PC-9 (cell line): ENCODE measurements at regions of chr1 and their contacts with region 1.

Region 1: DNA sequence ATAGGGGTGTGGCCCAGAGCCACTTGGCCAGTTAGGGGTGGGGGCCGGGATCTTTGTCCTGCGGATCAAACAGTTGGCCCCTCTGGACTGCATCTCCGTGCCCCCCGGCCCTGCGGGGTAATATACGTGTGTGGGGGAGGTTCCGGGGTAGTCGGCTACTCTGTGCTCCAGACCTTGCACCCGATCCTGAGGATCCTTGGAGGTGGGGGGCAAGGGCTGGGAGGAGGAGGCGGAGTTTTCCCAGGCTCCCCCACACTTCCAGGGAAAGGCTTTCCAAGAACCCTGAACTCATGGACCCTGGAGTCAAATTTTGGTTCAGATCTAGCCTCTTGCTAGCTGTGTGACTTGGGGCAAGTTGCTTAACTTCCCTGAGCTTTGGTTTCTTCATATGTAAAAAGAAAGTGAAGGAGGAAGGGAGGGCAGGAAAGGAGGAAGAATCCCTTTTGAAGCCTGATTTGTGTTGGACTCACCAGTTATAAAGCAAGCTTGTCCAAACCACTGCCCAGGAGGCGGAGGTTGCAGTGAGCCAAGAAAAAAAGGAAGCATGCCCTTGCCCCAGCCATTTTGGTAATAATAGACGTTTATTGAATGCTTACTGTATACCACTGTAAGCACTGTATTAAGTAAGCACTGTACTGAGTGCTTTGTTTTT is 686 bp downstream of the MIIP start:
- DNase-seq: no peak
- H3K4me3 ChIP-seq: peak overlapping the region; percentile 74
- H3K27ac ChIP-seq: no peak overlapping the region
- H3K4me1 ChIP-seq: no peaks in the 10 kb centered on the region; the same call in 1 of the 2 replicates
- H3K27me3 ChIP-seq: no peaks in the 10 kb centered on the region
- CTCF ChIP-seq: no peak

Region 2: GRCh38 chr1:11654137-11654938 is 365.6 kb before region 1 on chr1 and contains the starts of genes FBXO2 and FBXO44:
- CTCF ChIA-PET with region 1: no interaction called
- POLR2A ChIA-PET with region 1: interaction called, 16 read pairs
- intact Hi-C with region 1: no loop called
- DNase-seq: peak in 1 of 2 experiments; percentile 69
- H3K4me3 ChIP-seq: peak within 1 kb of the TSS; percentile 61
- H3K27ac ChIP-seq: peak within 1 kb of the TSS; percentile 60
- H3K4me1 ChIP-seq: no peaks in the 10 kb centered on the region; the same call in 1 of the 2 replicates
- H3K27me3 ChIP-seq: no peaks in the 10 kb centered on the region
- CTCF ChIP-seq: no peak
- total RNA-seq, gene FBXO2: 40.3 and 74.0 TPM in 2 replicates
- total RNA-seq, gene FBXO44: 31.9 and 32.4 TPM in 2 replicates

Region 3: DNA sequence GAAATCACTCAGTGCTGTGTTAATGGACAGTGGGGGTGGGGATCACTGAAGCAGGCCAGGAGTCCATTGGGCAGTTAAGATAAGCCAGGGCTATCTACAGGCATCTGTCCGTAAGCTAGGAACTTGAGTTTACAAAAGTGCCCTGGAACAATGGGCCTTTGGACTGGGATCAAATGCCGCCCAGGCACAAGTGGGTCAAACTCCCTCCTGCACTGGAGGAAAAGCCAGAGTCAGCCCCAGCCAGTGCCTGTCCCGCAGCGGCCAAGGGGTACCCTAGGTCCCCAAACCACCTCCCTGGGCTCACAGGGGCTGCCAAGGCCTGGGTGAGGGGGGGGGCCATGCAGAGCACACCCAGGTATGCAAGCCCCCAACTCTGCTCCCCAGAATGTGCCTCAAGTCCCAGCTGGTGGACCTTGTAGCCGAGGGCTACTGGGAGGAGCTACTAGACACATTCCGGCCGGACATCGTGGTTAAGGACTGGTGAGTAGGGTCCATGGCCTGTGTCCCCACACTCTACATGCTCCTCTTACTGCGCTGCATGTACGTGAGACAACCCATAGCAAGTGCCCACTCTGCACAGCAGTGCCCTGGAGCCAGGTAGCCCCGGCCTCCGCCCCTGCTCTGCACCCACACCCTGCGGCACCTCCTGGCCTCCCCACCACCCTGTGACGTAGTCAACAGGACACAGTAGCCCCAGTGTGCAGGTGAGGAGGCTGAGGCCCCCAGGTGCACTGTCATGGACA is 348.3 kb before region 1 on chr1:
- CTCF ChIA-PET with region 1: no interaction called
- POLR2A ChIA-PET with region 1: interaction called, 10 read pairs
- intact Hi-C with region 1: no loop called
- DNase-seq: no peak
- H3K4me3 ChIP-seq: no peak overlapping the region
- H3K27ac ChIP-seq: no peak overlapping the region
- H3K4me1 ChIP-seq: no peaks in the 10 kb centered on the region
- H3K27me3 ChIP-seq: no peaks in the 10 kb centered on the region
- CTCF ChIP-seq: no peak

Region 4: DNA sequence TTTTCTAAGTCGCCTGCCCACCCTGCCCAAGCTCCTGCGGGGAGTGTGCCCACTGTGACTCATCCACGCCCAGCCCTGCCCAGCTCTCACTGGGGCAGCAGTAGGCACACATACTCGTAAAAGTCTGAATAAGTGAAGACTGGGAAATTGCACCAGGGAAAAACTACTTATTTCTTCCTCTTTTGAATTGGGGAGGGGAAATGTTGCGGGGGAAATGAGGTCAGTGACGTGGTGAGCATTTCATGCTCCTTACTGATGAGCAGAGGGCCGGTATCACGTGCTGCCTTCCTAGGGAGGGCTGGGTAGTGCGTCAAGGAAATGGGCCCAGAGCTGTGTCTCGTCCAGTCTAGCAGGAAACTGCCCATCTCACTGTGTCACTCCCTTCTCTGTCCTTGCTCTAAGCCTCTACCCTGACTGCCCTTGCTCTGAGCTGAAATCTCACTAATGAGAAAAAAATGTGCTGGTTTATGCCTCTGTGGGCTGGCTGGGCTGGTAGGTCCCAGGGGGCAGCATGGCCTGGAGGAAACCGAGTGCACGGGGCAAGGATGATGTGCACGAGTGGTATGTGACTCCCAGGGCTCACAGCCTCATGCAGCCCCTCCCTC is 133.3 kb after region 1 on chr1:
- CTCF ChIA-PET with region 1: no interaction called
- POLR2A ChIA-PET with region 1: no interaction called
- intact Hi-C with region 1: no loop called
- DNase-seq: no peak
- H3K4me3 ChIP-seq: no peak overlapping the region
- H3K27ac ChIP-seq: no peak overlapping the region
- H3K4me1 ChIP-seq: peaks cover 32% of the 10 kb centered on the region
- H3K27me3 ChIP-seq: no peaks in the 10 kb centered on the region
- CTCF ChIP-seq: no peak